ENCODE measurements at regions of chr1 and their contacts with region 1.

Region 1: GRCh38 chr1:47002211-47002610 is 21.3 kb upstream of the CYP4X1 start:
- DNase-seq: no peak
- H3K4me3 ChIP-seq: no peak overlapping the region
- H3K27ac ChIP-seq: no peak overlapping the region
- H3K4me1 ChIP-seq: peaks cover 0 to 3% (median 0%) of the 10 kb centered on the region in 4 experiments; a peak in 2 of 7 replicates
- H3K27me3 ChIP-seq: no peaks in the 10 kb centered on the region; a peak in 1 of 7 replicates
- CTCF ChIP-seq: peak in 2 of 3 experiments; percentile 41 to 64; a peak in 2 of 4 replicates
- EP300 ChIP-seq: no peak
- POLR2A ChIP-seq: no peak
- RAD21 ChIP-seq: peak; percentile 50 to 58

Region 2: DNA sequence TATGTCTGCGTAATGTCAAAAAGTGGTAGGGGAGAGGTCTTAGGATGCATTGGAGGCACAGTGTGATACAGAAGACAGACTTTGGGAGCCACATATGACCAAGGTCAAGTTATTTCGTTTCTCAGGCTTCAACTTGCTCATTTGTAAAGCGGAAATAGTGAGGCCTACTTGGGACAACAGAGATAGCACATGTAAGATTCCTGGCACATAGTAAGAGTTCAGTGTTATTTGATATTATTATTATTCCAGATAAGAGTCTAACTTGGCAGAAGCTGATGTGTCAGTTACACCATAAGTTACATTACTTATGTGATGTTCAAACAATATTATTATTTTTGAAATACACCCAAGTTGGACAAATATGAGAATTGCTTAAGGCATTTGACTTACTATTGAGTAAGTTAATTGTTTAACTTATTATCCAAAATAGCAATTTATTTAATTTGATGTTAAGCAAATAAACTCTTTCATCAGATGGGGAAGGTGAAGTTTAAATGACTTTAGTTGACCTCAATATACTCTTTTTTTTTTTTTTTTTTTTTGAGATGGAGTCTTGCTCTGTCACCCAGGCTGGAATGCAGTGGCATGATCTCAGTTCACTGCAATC is 11.1 kb after region 1 on chr1:
- CTCF ChIA-PET with region 1: interaction called, 10 read pairs
- POLR2A ChIA-PET with region 1: interaction called, 3 read pairs
- DNase-seq: no peak
- H3K4me3 ChIP-seq: no peak overlapping the region
- H3K27ac ChIP-seq: no peak overlapping the region
- H3K4me1 ChIP-seq: peaks cover 0 to 6% (median 2%) of the 10 kb centered on the region in 4 experiments; a peak in 5 of 7 replicates
- H3K27me3 ChIP-seq: no peaks in the 10 kb centered on the region
- CTCF ChIP-seq: no peak
- EP300 ChIP-seq: no peak
- POLR2A ChIP-seq: no peak
- RAD21 ChIP-seq: no peak

Region 3: DNA sequence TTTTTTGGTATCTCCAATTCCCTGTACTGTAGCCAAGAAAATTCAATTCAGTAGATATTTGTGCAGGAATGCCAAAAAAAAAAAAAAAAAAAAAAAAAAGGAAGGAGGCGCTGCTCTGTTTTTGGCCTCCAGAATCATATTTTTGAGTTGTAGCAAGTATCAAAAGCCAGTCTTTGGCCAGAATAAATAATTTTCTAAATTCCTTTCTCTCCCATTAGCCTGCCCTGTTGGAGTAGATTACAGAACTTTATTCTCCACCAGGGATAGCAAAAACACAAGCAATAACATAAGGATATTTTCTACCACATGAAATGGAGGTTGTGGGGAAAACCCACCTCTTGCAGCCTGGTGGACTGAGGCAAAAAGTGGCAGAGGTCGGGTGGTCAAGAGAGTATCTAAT is 18.9 kb after region 1 on chr1:
- CTCF ChIA-PET with region 1: interaction called, 14 read pairs
- POLR2A ChIA-PET with region 1: interaction called, 3 read pairs
- DNase-seq: no peak
- H3K4me3 ChIP-seq: no peak overlapping the region
- H3K27ac ChIP-seq: no peak overlapping the region
- H3K4me1 ChIP-seq: peaks cover 0 to 21% (median 9%) of the 10 kb centered on the region in 4 experiments; a peak in 6 of 7 replicates
- H3K27me3 ChIP-seq: peaks cover 0 to 10% (median 3%) of the 10 kb centered on the region in 4 experiments; a peak in 3 of 7 replicates
- CTCF ChIP-seq: no peak
- EP300 ChIP-seq: no peak
- POLR2A ChIP-seq: no peak
- RAD21 ChIP-seq: no peak